Endothelial cell of umbilical vein (primary cell): ENCODE measurements at regions of chr4 and their contacts with region 1.

Region 1: GRCh38 chr4:77007358-77008191 is 58.0 kb downstream of the SEPTIN11 start:
- DNase-seq: peak; percentile 95
- H3K4me3 ChIP-seq: peak overlapping the region in 1 of 3 experiments; percentile 28
- H3K27ac ChIP-seq: peak overlapping the region; percentile 100
- H3K4me1 ChIP-seq: peaks cover 91% of the 10 kb centered on the region
- H3K27me3 ChIP-seq: no peaks in the 10 kb centered on the region
- CTCF ChIP-seq: no peak
- POLR2A ChIP-seq: peak; percentile 54

Region 2: DNA sequence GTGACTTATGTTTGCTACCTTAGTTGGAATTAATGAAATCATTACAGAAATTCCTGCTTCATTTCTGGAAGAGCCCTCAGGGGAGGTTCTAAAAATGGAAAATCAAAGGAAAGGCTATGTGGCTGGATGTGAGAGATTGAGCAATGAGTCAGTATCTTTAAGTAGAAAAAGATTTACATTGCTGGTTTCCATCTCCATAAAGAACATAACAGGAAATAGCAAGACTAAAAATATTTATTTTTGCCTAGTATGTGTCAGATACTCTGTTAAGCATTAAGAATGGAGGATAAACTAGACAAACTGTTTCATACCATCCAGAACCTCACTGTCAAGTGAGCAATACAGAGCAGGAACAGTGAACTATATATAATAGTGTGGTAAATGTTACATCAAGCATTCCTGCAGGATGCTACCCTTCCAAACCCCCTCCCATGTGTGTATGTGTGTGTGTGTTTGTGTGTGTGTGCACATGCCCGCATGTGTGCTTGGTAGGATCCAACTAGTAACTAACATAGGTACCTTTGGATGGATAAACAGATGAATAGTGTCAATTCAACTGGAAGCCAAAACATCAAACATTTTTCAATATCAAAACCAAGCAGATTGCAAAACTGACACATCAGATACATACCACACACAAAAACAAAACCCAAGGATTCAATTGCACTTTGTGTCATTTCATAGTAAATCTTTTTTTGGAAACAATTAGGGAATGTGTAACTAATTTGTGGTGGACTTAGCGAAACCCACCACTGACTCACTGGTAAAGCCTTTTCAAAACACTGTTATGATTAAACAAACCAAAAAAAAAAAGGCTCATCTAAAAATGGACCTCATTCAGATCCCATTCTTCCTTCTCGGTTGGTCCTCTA is 349.1 kb before region 1 on chr4:
- CTCF ChIA-PET with region 1: no interaction called
- POLR2A ChIA-PET with region 1: no interaction called
- dilution Hi-C with region 1: no loop called
- intact Hi-C with region 1: loop called (anchors 5 kb)
- DNase-seq: peak; percentile 79
- H3K4me3 ChIP-seq: no peak overlapping the region
- H3K27ac ChIP-seq: peak overlapping the region; percentile 83
- H3K4me1 ChIP-seq: peaks cover 23% of the 10 kb centered on the region
- H3K27me3 ChIP-seq: no peaks in the 10 kb centered on the region
- CTCF ChIP-seq: no peak
- POLR2A ChIP-seq: peak; percentile 39

Region 3: GRCh38 chr4:76830964-76831703 is 176.4 kb before region 1 on chr4:
- CTCF ChIA-PET with region 1: no interaction called
- POLR2A ChIA-PET with region 1: no interaction called
- dilution Hi-C with region 1: no loop called
- intact Hi-C with region 1: loop called (anchors 2 kb)
- DNase-seq: peak; percentile 98
- H3K4me3 ChIP-seq: no peak overlapping the region
- H3K27ac ChIP-seq: peak overlapping the region; percentile 78
- H3K4me1 ChIP-seq: peaks cover 23% of the 10 kb centered on the region
- H3K27me3 ChIP-seq: no peaks in the 10 kb centered on the region
- CTCF ChIP-seq: no peak
- POLR2A ChIP-seq: peak; percentile 57

Region 4: DNA sequence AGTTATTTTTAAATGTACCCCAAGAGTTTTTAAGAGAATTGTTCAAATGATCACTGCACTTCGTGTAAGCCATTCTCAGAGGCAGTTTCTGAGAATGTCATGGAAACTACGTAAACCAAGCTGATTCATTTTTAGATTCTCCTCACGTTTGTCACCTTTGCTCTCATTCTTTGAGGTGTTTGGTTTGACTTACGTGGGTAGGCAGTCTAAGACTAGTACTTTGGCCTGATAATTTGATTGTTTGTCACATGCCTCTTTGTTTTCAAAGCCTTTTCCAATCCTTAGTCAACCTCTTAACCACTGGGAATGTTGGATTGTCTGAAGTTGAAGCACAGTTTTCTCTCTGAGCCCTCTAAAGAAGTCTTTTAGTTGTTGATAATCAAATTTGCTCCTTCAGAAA is 47.6 kb before region 1 on chr4:
- CTCF ChIA-PET with region 1: no interaction called
- POLR2A ChIA-PET with region 1: no interaction called
- dilution Hi-C with region 1: no loop called
- intact Hi-C with region 1: no loop called
- DNase-seq: no peak
- H3K4me3 ChIP-seq: no peak overlapping the region
- H3K27ac ChIP-seq: no peak overlapping the region
- H3K4me1 ChIP-seq: no peaks in the 10 kb centered on the region
- H3K27me3 ChIP-seq: no peaks in the 10 kb centered on the region
- CTCF ChIP-seq: no peak
- POLR2A ChIP-seq: no peak

Region 5: GRCh38 chr4:77022560-77023179 is 15.1 kb after region 1 on chr4:
- CTCF ChIA-PET with region 1: interaction called, 4 read pairs
- POLR2A ChIA-PET with region 1: no interaction called
- dilution Hi-C with region 1: no loop called
- intact Hi-C with region 1: loop called (anchors 1 kb)
- DNase-seq: peak; percentile 76
- H3K4me3 ChIP-seq: no peak overlapping the region
- H3K27ac ChIP-seq: peak overlapping the region; percentile 55
- H3K4me1 ChIP-seq: peaks cover 10% of the 10 kb centered on the region
- H3K27me3 ChIP-seq: no peaks in the 10 kb centered on the region
- CTCF ChIP-seq: peak in 1 of 2 donors; percentile 24
- POLR2A ChIP-seq: no peak

Region 6: DNA sequence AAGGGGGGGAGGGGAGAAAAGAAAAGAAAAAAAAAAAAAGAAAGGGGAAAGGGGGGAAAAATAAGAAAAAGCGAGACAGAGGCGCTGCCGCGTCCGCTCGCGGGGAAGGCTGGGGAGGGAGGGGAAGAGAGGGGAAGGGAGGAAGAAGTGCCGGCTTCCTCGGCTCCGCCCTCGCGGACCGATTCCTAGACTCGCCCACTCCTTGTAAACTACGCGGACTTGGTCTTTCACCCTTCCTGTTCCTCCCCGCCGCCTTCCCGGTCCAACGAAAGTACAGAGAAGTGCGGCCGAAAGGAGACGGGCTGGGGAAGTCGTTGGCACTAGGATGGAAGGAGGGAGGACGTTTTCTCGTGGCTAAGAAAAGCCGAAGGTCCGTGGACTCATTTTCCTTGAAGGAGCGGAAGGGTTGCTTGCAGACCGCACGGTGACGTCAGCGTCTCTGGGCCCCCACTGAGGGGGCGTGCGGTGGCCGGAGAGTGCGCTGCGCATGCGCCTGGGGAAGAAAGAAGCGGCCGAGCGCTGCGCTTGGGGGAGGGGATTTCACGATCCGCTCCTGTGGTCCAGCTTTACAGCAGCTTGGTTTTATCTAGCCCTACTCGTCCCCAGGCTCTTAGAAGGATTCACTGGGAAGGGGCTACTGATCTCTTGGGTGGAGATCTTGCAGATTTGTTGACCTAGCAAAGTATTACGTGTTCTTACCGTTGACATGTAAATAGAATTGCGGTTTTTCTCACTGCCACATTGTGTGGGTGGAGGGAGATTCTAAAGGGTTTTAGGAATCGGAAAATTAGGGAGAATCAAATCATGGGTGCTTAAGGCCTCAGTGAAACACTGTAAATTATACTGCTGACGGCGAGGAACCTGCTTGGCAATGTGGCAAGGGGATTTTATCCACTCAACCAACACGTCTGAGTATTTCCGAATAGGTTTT is 68.6 kb after region 1 on chr4 and contains the start of gene CCNI:
- CTCF ChIA-PET with region 1: no interaction called
- POLR2A ChIA-PET with region 1: no interaction called
- dilution Hi-C with region 1: no loop called
- intact Hi-C with region 1: loop called (anchors 1 kb)
- DNase-seq: peak; percentile 99
- H3K4me3 ChIP-seq: peak within 1 kb of the TSS; percentile 83 to 98 (median 90)
- H3K27ac ChIP-seq: peak within 1 kb of the TSS; percentile 98
- H3K4me1 ChIP-seq: peaks cover 22% of the 10 kb centered on the region
- H3K27me3 ChIP-seq: no peaks in the 10 kb centered on the region
- CTCF ChIP-seq: no peak
- POLR2A ChIP-seq: peak; percentile 94
- total RNA-seq, gene CCNI: 212 and 227 TPM in 2 replicates